HEK293 (cell line): ENCODE measurements at regions of chr19 and their contacts with region 1.

Region 1: DNA sequence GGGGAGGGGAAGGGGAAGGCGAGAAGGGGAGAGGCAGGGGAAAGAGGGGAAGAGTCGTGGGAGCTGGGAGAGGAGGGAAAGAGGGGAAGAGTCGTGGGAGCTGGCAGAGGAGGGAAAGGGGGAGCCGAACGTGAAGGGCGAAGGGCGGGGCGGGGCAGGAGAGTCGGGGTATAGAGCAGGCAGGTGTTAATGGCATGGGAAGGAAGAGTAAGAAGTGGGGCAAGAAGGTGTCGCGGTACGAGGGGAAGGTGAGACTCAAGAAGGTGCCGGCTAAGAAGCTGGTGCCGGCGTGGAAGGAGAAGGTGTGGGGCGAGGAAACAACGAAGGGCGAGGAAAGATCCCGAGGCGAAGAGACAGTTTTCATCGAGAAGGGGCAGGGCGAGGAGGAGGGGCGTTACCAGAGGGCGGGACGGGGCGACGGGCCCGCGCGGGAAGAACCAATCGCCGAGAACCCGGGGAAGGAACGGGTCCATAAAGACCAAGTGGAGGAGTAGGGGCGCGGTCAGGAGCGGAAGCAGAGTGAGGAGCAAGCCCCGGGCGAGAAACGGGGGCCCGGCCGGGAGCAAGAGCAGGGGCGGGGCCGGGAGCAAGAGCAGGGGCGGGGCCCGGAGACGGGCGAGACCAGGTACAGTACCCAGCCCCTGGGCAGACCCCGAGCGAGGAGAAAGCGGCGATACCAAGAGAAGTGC is 463 bp downstream of the CATSPERG start:
- H3K4me3 ChIP-seq: peak overlapping the region; percentile 66
- H3K27ac ChIP-seq: peak overlapping the region; percentile 80
- H3K4me1 ChIP-seq: peaks cover 14% of the 10 kb centered on the region
- CTCF ChIP-seq: no peak

Region 2: GRCh38 chr19:38142176-38143035 is 193.7 kb before region 1 on chr19:
- CTCF ChIA-PET with region 1: interaction called, 15 read pairs
- POLR2A ChIA-PET with region 1: no interaction called
- H3K4me3 ChIP-seq: no peak overlapping the region
- H3K27ac ChIP-seq: no peak overlapping the region
- H3K4me1 ChIP-seq: peaks cover 2% of the 10 kb centered on the region; the same call in 1 of the 2 replicates
- CTCF ChIP-seq: peak; percentile 90

Region 3: GRCh38 chr19:38239816-38240215 is 96.3 kb before region 1 on chr19:
- CTCF ChIA-PET with region 1: interaction called, 183 read pairs
- POLR2A ChIA-PET with region 1: interaction called, 8 read pairs
- H3K4me3 ChIP-seq: no peak overlapping the region
- H3K27ac ChIP-seq: no peak overlapping the region
- H3K4me1 ChIP-seq: peaks cover 3% of the 10 kb centered on the region; the same call in 1 of the 2 replicates
- CTCF ChIP-seq: no peak

Region 4: GRCh38 chr19:38250821-38251563 is 85.1 kb before region 1 on chr19:
- CTCF ChIA-PET with region 1: interaction called, 183 read pairs
- POLR2A ChIA-PET with region 1: interaction called, 11 read pairs
- H3K4me3 ChIP-seq: no peak overlapping the region
- H3K27ac ChIP-seq: no peak overlapping the region
- H3K4me1 ChIP-seq: peaks cover 19% of the 10 kb centered on the region
- CTCF ChIP-seq: no peak

Region 5: GRCh38 chr19:38270587-38271167 is 65.4 kb before region 1 on chr19:
- CTCF ChIA-PET with region 1: interaction called, 14 read pairs
- POLR2A ChIA-PET with region 1: interaction called, 11 read pairs
- H3K4me3 ChIP-seq: no peak overlapping the region
- H3K27ac ChIP-seq: peak overlapping the region; percentile 70
- H3K4me1 ChIP-seq: peaks cover 44% of the 10 kb centered on the region
- CTCF ChIP-seq: no peak

Region 6: GRCh38 chr19:38374429-38375176 is 38.5 kb after region 1 on chr19 and contains the start of gene PSMD8:
- CTCF ChIA-PET with region 1: interaction called, 29 read pairs
- POLR2A ChIA-PET with region 1: interaction called, 83 read pairs
- H3K4me3 ChIP-seq: peak within 1 kb of the TSS; percentile 70
- H3K27ac ChIP-seq: peak within 1 kb of the TSS; percentile 93
- H3K4me1 ChIP-seq: peaks cover 20% of the 10 kb centered on the region
- CTCF ChIP-seq: peak; percentile 97